Activated B cell treated with CpG ODN at 0.5 μM for 24 hours (primary cell): ENCODE measurements at regions of chr3 and their contacts with region 1.

Region 1: DNA sequence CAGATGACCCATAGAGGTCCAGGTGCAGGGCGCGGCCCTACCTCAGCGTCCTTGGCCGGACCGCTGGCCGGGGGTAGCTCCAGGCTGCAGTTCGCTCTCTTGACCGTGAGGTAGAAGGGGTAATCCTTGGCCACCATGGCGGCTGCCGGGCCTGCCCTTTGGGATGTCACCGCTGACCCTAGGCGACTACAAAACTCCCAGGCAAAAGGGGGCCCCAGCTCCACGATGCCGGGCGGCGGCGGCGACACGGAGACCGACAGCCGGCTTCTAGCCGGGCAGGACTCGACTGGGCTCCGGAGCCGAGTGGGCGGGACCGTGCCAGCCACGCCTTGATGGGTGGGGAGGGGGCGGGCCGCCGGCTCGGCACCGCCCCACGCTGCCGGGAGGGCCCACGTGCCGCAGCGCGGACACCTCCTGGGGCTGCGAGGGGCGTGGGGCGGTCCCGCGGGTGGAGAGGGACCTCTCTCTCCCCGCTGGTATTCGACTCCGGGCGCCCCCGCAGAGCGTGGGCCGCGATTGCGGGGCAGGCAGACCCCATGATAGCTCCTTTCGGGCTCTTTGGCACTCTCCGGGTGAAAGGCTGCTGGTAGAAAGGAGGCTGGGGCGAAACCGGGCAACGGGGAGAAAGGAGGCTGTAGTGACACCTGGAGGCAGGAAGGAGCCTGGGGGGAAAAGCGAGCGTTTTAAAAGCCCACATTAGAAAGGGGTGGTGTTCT is at the start of gene ARHGEF3:
- DNase-seq: peak; percentile 84
- ATAC-seq: peak; percentile 91
- H3K4me3 Mint-ChIP-seq: peak within 1 kb of the TSS; percentile 95
- H3K27ac Mint-ChIP-seq: peak within 1 kb of the TSS; percentile 87
- H3K4me1 Mint-ChIP-seq: peaks cover 49% of the 10 kb centered on the region
- H3K27me3 Mint-ChIP-seq: no peaks in the 10 kb centered on the region
- CTCF ChIP-seq: peak; percentile 32
- total RNA-seq, gene ARHGEF3: 22.1 and 27.0 TPM in 2 replicates

Region 2: DNA sequence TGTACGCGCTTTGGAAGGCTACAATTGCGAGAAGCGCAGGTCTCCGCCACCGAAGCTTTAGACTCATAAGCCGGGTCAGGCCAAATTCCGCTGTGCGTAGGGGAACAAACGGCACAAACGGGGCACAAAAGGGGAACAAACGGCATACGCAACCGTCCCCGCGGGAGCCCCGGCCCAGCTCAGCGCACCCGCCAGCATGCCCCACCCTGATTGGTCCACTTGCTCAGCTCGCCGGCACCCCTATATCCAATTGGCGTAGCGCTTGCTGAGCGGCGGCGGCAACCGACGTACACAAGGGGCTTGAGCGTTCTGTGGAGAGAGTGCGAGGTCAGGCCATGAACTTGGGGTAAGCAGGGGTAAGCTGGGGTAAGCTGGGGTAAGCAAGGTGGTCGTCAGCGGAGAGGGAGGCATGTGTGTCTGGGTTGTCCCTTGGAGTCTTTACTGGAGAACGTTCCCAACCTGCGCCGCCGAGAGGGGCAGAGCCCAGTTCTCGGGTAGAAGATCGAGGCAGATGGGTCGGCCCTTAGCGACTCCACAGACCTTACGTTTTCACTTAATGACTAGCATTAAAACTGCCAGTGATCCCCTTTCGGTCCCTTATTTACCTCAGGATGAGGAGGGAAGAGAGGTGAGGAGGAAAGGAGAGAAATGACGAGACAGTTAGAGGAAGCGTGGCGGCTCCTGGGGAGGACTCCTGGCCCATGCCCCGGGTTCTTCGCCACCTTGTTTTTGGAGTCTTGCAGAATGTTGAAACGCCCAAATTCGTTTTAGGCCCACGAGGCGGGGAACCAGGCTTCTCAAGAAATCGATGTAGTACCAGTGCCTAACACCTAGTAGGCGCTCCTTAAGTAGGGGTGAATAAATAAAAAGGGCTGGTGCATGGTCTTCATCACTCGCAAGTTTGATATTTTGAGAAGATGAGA is 244.7 kb before region 1 on chr3 and contains the start of gene CCDC66:
- CTCF ChIA-PET with region 1: no interaction called
- POLR2A ChIA-PET with region 1: no interaction called
- intact Hi-C with region 1: loop called (anchors 1 kb)
- DNase-seq: peak; percentile 84
- ATAC-seq: peak; percentile 98
- H3K4me3 Mint-ChIP-seq: peak within 1 kb of the TSS; percentile 98
- H3K27ac Mint-ChIP-seq: peak within 1 kb of the TSS; percentile 97
- H3K4me1 Mint-ChIP-seq: peaks cover 20% of the 10 kb centered on the region
- H3K27me3 Mint-ChIP-seq: no peaks in the 10 kb centered on the region
- CTCF ChIP-seq: no peak
- total RNA-seq, gene CCDC66: 29.1 and 34.9 TPM in 2 replicates

Region 3: DNA sequence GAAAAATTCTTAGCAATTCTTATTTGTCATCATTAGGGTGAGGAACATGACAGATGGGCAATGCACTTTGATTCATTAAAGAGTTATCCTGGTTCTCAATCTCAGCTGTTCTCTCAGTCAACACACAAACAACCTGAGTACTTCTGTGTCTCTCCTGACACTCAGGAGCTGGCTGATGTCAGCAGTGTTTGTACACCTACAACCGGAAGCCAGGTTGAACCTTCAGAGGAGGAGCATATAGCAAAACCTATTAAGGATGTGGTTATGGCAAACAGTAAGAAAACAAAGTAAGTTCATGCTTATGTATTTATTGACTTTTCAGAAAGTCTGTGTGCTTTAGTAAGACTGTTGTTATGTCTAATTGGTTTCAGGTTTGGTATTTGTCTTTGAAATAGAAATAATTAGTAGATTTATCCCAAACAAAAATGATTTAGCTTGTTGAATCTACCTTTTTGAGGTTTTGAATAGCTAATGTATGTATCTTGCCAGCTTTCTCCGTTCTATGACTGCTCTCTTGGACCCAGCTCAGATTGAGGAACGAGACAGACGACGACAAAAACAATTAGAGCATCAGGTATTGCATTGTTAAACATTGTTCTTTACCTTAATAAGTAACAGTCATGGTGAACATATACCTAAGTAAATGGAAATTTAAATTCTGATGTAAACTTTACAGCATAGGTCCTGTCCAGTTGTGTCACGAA is 208.2 kb before region 1 on chr3:
- CTCF ChIA-PET with region 1: no interaction called
- POLR2A ChIA-PET with region 1: no interaction called
- intact Hi-C with region 1: no loop called
- DNase-seq: no peak
- ATAC-seq: no peak
- H3K4me3 Mint-ChIP-seq: no peak overlapping the region
- H3K27ac Mint-ChIP-seq: no peak overlapping the region
- H3K4me1 Mint-ChIP-seq: no peaks in the 10 kb centered on the region
- H3K27me3 Mint-ChIP-seq: no peaks in the 10 kb centered on the region
- CTCF ChIP-seq: no peak

Region 4: DNA sequence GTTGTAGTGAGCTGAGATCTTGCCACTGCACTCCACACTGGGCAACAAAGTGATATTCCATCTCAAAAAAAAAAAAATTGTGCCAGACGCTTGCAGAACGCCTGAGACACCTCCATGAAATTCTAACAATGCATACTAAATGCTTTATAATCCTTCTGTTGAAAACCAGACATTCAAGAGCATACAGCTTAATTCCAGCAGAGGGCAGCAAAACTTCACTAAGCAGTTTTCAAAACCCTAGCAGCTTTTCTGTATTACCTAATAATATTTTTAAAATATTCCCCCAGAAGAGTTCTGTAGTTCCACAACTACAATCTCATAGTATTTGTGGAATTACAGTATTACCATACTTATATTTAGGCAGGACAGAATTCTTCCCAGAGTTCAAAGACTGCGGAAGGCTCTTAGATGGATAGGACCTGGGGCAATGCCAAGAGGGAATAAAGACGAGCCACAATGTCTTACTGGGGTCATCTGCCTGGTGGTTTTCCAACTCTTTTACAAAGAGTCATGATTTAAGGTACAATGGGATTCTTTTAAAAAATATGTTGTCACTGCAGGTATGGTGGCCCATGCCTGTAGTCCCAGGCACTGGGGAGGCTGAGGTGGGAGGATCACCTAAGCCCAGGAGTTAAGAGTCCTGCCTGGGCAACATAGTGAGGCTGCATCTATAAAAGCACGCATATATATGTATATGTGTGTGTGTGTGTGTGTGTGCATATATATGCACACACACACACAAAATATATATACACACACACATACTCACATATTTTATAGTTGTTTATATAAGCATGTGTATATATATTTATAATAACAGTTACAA is 99.1 kb before region 1 on chr3:
- CTCF ChIA-PET with region 1: interaction called, 237 read pairs
- POLR2A ChIA-PET with region 1: interaction called, 41 read pairs
- intact Hi-C with region 1: loop called (anchors 1 kb)
- DNase-seq: no peak
- ATAC-seq: peak; percentile 71
- H3K4me3 Mint-ChIP-seq: no peak overlapping the region
- H3K27ac Mint-ChIP-seq: no peak overlapping the region
- H3K4me1 Mint-ChIP-seq: peaks cover 12% of the 10 kb centered on the region
- H3K27me3 Mint-ChIP-seq: no peaks in the 10 kb centered on the region
- CTCF ChIP-seq: peak; percentile 53

Region 5: DNA sequence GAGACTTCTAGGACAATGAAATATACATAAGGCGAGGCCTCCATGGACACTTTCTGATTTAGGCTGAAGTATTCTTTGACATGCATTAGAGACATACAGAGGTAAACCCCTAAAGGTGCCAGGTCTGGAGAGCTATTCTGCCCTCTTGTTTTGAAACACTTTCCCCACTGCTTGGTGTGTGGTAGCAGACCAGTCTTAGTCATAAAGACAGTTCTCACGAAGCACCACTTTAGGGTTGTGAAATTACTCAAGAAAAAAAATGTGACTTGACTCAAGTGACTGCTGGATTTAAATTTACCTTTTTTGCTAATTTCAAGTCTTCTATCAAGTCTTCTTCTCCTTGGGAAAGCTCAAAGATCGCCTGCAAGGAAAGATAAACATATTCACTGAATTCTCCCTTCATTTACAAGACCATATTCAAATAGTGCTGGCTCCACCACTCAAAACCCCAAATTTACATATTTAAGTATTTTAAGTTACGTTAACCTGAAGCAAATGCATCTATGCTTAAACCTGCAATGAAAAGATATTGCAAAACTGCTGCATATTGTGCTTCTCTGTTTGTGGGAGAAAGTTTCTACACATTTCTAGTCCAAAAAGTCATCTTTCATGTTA is 48.5 kb before region 1 on chr3:
- CTCF ChIA-PET with region 1: interaction called, 104 read pairs
- POLR2A ChIA-PET with region 1: interaction called, 181 read pairs
- intact Hi-C with region 1: loop called (anchors 1 kb)
- DNase-seq: no peak
- ATAC-seq: peak; percentile 64
- H3K4me3 Mint-ChIP-seq: peak overlapping the region; percentile 52
- H3K27ac Mint-ChIP-seq: peak overlapping the region; percentile 97
- H3K4me1 Mint-ChIP-seq: peaks cover 62% of the 10 kb centered on the region
- H3K27me3 Mint-ChIP-seq: no peaks in the 10 kb centered on the region
- CTCF ChIP-seq: no peak

Region 6: DNA sequence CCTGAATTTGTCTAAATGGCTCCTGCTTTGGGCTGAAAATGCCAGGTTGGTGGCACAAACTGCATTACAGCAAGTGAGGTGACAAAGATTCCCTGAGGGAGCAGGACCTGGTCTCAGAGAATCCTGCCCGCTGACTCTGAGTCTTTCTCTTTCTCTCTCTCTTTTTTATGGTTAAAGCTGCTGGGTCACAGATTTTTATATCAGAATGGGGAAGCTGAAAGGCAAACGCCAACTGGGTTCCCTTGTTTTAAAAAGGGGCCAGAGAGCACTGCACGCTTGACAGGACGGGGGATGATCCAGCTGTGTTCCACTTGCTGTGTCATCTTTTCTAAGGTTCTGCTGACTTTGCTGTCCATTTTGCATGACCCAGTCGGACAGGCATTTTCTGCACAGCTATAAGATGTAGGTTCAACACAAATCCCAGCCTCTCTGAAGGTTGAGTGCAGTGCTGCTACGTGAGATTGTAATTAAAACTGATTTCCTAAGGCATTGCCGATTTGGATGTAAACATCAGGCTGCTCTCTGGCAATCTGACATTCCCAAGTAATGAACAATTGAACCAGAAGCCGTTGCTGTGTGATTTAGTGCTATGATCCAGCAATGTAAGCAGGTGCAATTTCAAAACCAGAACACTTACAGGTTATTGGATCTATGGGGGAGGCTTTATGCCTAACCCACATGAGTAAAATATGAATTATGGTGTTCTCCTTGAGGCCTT is 25.8 kb before region 1 on chr3:
- CTCF ChIA-PET with region 1: interaction called, 91 read pairs
- POLR2A ChIA-PET with region 1: interaction called, 16 read pairs
- intact Hi-C with region 1: no loop called
- DNase-seq: no peak
- ATAC-seq: peak; percentile 40
- H3K4me3 Mint-ChIP-seq: no peak overlapping the region
- H3K27ac Mint-ChIP-seq: peak overlapping the region; percentile 53
- H3K4me1 Mint-ChIP-seq: peaks cover 53% of the 10 kb centered on the region
- H3K27me3 Mint-ChIP-seq: no peaks in the 10 kb centered on the region
- CTCF ChIP-seq: no peak

Region 7: DNA sequence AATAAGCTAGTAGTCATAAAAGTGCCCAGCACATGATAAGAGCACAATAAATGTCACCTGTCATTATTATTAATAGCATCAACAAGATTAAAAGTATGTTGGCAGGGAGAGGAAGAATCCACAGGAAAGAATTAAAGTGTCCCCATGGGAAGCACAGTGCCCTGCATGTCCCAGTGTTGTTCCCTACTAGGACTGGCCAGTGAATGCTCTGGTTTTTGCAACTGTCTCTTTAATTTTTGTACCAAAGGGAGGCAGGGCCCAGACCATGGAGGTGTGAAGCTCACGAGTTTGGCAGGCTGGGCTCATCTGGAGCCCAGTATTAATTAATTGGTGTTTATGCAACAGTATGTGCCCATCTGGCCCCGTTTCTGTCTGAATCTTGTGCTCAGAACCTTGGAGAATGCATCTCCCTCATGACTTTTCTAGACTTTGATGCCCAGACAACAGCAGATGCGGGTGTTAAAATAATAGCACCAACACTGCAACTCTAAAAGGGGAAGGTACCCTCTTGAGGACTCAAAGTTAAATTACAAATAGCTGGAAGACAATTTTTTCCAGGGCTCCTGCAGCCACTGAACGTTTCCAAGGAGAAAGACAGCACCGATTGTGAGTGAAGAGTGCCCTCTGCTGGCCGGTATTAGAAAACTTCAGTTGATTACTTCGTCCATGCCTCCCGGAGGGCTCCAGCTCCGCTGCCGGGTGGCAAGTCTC is 186.8 kb after region 1 on chr3:
- CTCF ChIA-PET with region 1: interaction called, 108 read pairs
- POLR2A ChIA-PET with region 1: interaction called, 4 read pairs
- intact Hi-C with region 1: loop called (anchors 1 kb)
- DNase-seq: peak; percentile 45
- ATAC-seq: peak; percentile 61
- H3K4me3 Mint-ChIP-seq: no peak overlapping the region
- H3K27ac Mint-ChIP-seq: no peak overlapping the region
- H3K4me1 Mint-ChIP-seq: peaks cover 3% of the 10 kb centered on the region
- H3K27me3 Mint-ChIP-seq: peaks cover 12% of the 10 kb centered on the region
- CTCF ChIP-seq: peak; percentile 82